Activated CD8-positive, alpha-beta T cell treated with anti-CD3 and anti-CD28 coated beads for 36 hours (primary cell): ENCODE measurements at regions of chr5 and their contacts with region 1.

Region 1: DNA sequence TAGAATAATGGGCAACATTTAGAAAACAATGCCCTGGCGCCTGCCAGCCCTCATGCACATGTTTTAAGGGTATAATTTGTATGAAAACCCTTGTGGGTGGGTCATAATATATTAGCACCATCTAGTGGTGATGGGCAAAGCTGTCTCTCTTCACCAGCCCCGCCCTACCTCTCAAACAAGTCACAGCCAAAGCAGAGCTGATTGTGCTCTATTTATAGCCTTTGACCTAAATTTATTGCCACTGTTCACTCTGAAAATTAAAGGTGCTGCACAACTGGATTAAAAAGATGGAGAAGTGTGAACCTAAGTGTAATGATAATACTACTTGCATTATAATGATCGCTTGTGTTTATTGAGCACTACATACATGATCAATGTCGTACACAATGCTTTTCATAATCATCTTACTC is 131.9 kb upstream of the ANKH start:
- DNase-seq: peak; percentile 76
- ATAC-seq: peak; percentile 97
- H3K4me3 Mint-ChIP-seq: no peak overlapping the region
- H3K27ac Mint-ChIP-seq: no peak overlapping the region
- H3K4me1 Mint-ChIP-seq: peaks cover 7% of the 10 kb centered on the region
- H3K27me3 Mint-ChIP-seq: peaks cover 2% of the 10 kb centered on the region
- CTCF ChIP-seq: peak; percentile 67

Region 2: DNA sequence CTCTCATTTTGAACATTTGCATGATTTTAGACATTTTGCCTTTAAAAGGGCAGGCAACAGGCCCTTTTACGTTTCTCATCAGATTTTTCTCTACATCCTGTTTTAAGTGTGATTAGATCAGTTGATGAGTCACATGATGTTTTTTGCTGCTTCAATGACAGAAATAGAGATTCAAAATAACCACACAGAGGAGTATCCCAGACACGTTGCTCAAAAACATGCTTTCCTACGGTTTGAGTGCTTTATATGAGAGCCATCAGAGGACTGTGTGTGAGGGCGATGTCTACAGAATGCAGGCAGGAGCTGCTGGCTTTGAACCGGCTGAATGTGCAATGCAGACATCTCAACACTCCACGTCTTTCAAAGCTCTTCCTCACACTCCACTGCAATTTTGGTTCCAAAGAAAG is 296.9 kb before region 1 on chr5:
- CTCF ChIA-PET with region 1: interaction called, 20 read pairs
- POLR2A ChIA-PET with region 1: no interaction called
- intact Hi-C with region 1: no loop called
- DNase-seq: peak; percentile 33
- ATAC-seq: peak; percentile 91
- H3K4me3 Mint-ChIP-seq: peak overlapping the region; percentile 46
- H3K27ac Mint-ChIP-seq: peak overlapping the region; percentile 97
- H3K4me1 Mint-ChIP-seq: peaks cover 68% of the 10 kb centered on the region
- H3K27me3 Mint-ChIP-seq: no peaks in the 10 kb centered on the region
- CTCF ChIP-seq: no peak

Region 3: GRCh38 chr5:14871210-14872069 is 132.1 kb before region 1 on chr5 and contains the start of gene ANKH:
- CTCF ChIA-PET with region 1: interaction called, 16 read pairs
- POLR2A ChIA-PET with region 1: no interaction called
- intact Hi-C with region 1: loop called (anchors 5 kb)
- DNase-seq: peak; percentile 81
- ATAC-seq: peak; percentile 84
- H3K4me3 Mint-ChIP-seq: peak within 1 kb of the TSS; percentile 90
- H3K27ac Mint-ChIP-seq: peak within 1 kb of the TSS; percentile 90
- H3K4me1 Mint-ChIP-seq: peaks cover 29% of the 10 kb centered on the region
- H3K27me3 Mint-ChIP-seq: no peaks in the 10 kb centered on the region
- CTCF ChIP-seq: no peak
- total RNA-seq, gene ANKH: 85.4 to 87.2 TPM

Region 4: GRCh38 chr5:14956413-14957046 is 47.0 kb before region 1 on chr5:
- CTCF ChIA-PET with region 1: interaction called, 23 read pairs
- POLR2A ChIA-PET with region 1: no interaction called
- intact Hi-C with region 1: no loop called
- DNase-seq: no peak
- ATAC-seq: no peak
- H3K4me3 Mint-ChIP-seq: no peak overlapping the region
- H3K27ac Mint-ChIP-seq: no peak overlapping the region
- H3K4me1 Mint-ChIP-seq: no peaks in the 10 kb centered on the region
- H3K27me3 Mint-ChIP-seq: peaks cover 3% of the 10 kb centered on the region
- CTCF ChIP-seq: no peak

Region 5: GRCh38 chr5:15013654-15014463 is 10.3 kb after region 1 on chr5:
- CTCF ChIA-PET with region 1: interaction called, 17 read pairs
- POLR2A ChIA-PET with region 1: no interaction called
- intact Hi-C with region 1: no loop called
- DNase-seq: no peak
- ATAC-seq: no peak
- H3K4me3 Mint-ChIP-seq: no peak overlapping the region
- H3K27ac Mint-ChIP-seq: no peak overlapping the region
- H3K4me1 Mint-ChIP-seq: no peaks in the 10 kb centered on the region
- H3K27me3 Mint-ChIP-seq: peaks cover under 1% of the 10 kb centered on the region
- CTCF ChIP-seq: peak; percentile 90